Activated CD8-positive, alpha-beta memory T cell treated with anti-CD3 and anti-CD28 coated beads, Interleukin-2, amount 10 ng/mL, durations not matched to agents 7 days and 5 days (primary cell): ENCODE measurements at regions of chr18 and their contacts with region 1.

Region 1: DNA sequence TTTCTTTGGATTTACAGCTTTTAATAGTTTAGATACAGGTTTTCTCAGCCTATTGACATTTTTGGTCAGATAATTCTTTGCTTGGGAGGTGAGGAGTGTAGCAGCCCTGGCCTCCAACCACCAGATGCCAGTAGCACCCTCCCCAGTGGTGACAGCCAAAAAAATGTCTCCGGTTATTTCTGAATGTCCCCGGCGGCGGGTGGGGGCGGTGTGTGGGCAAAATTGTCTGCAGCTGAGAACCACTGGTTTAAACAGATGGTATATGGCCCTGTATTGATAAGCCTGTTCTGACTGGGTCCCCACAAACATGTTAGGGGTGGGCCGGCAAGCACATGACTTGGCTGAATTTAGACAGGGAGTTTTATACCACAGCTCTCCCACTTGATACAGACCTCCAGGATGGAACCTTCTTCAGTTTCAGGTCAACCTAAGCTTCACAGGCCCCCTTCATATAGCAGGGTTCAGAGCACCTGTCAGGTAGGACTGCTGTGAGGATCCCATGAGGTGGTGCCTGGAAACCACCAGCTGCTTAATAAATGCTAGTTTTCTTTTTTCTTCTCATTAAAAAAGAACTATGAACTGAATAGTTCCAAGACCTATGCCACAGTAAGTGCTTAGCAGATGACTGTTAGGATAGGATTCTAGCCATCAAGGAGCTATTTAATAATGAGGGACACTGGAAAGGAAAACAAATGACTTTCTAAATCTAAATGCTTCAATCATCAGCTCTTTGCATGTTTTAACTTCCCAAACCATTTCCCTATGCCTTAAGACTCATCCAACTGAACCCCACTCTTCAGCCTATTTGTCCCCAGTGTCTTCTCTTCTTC is 18.1 kb downstream of the LPIN2 start:
- DNase-seq: peak; percentile 86
- ATAC-seq: peak; percentile 77
- H3K4me3 Mint-ChIP-seq: peak overlapping the region; percentile 9
- H3K27ac Mint-ChIP-seq: peak overlapping the region; percentile 79
- H3K4me1 Mint-ChIP-seq: peaks cover 78% of the 10 kb centered on the region
- H3K27me3 Mint-ChIP-seq: no peaks in the 10 kb centered on the region

Region 2: GRCh38 chr18:2932247-2933181 is 62.3 kb before region 1 on chr18:
- CTCF ChIA-PET with region 1: interaction called, 48 read pairs
- DNase-seq: no peak
- ATAC-seq: peak; percentile 60
- H3K4me3 Mint-ChIP-seq: peak overlapping the region; percentile 10
- H3K27ac Mint-ChIP-seq: peak overlapping the region; percentile 76
- H3K4me1 Mint-ChIP-seq: peaks cover 29% of the 10 kb centered on the region
- H3K27me3 Mint-ChIP-seq: no peaks in the 10 kb centered on the region

Region 3: GRCh38 chr18:2958819-2959298 is 36.0 kb before region 1 on chr18:
- CTCF ChIA-PET with region 1: interaction called, 111 read pairs
- DNase-seq: peak; percentile 83
- ATAC-seq: peak; percentile 40
- H3K4me3 Mint-ChIP-seq: peak overlapping the region; percentile 50
- H3K27ac Mint-ChIP-seq: peak overlapping the region; percentile 100
- H3K4me1 Mint-ChIP-seq: peaks cover 88% of the 10 kb centered on the region
- H3K27me3 Mint-ChIP-seq: no peaks in the 10 kb centered on the region

Region 4: DNA sequence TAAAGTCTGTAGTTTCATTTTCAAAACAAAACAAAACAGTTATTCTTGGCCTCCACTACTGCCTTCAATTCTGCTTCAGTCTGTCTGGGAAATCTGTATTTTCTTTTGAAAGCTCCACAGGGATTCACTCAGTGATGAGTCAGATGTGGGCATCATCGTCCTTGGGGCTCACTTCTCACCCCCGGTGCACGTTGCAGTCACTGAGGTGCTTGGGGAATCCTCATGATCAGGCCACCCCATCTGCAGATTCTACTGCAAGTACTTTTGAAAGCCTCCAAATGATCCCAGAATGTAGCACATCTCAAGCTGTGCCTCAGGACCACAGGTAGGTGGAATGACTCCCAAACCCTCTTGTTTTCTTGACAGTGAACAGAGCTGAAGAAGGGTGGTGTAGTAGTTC is 16.2 kb before region 1 on chr18:
- CTCF ChIA-PET with region 1: interaction called, 23 read pairs
- DNase-seq: peak; percentile 59
- ATAC-seq: peak; percentile 20
- H3K4me3 Mint-ChIP-seq: peak overlapping the region; percentile 73
- H3K27ac Mint-ChIP-seq: peak overlapping the region; percentile 91
- H3K4me1 Mint-ChIP-seq: peaks cover 82% of the 10 kb centered on the region
- H3K27me3 Mint-ChIP-seq: no peaks in the 10 kb centered on the region

Region 5: DNA sequence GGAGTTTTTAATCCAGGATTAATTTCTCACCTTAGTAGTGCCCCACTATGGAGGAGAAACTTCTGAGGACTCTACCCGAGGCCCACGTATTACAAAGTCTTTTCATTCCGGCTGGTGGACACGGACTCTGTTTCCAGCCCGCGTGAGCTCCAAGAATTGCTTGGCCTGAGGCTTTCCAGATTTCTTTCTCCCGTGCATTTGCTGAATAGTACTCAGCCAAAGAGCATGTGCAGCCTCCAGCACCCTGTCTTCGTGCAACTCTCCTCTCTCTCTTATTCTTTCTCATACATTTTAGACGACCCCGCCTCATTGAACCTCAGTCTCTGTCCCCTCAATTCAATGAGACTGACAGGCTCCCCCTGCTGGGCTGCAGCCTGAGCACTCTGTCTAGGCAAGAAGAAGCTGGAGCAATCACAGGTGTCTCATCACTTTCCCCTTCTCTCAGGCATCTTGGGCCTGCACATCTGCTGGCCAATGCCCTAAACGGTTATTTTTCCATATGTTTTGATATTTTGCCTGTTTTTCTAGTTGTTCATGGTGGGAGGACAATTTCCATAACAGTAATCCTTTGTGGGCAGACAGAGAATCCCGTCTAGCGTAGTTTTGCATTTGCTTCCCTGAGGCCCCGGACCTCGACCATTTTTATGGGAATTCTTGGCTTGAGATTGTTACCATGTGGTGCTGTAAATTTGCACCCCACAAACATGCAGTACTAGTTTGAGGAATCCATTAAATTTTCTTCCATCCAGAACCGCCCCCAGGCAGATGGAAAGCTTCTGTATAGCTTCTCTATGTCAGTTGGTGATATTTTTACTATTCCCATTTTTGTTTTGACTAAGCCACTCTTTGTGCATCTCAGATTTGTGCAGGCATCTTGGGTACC is 68.2 kb after region 1 on chr18:
- CTCF ChIA-PET with region 1: interaction called, 258 read pairs
- DNase-seq: peak; percentile 88
- ATAC-seq: peak; percentile 45
- H3K4me3 Mint-ChIP-seq: peak overlapping the region; percentile 62
- H3K27ac Mint-ChIP-seq: peak overlapping the region; percentile 100
- H3K4me1 Mint-ChIP-seq: peaks cover 72% of the 10 kb centered on the region
- H3K27me3 Mint-ChIP-seq: no peaks in the 10 kb centered on the region

Region 6: GRCh38 chr18:3129053-3129864 is 134.4 kb after region 1 on chr18:
- CTCF ChIA-PET with region 1: interaction called, 61 read pairs
- DNase-seq: peak; percentile 87
- ATAC-seq: peak; percentile 97
- H3K4me3 Mint-ChIP-seq: no peak overlapping the region
- H3K27ac Mint-ChIP-seq: no peak overlapping the region
- H3K4me1 Mint-ChIP-seq: peaks cover 12% of the 10 kb centered on the region
- H3K27me3 Mint-ChIP-seq: no peaks in the 10 kb centered on the region

Region 7: GRCh38 chr18:3245853-3246634 is 251.2 kb after region 1 on chr18:
- CTCF ChIA-PET with region 1: interaction called, 40 read pairs
- DNase-seq: peak; percentile 90
- ATAC-seq: peak; percentile 56
- H3K4me3 Mint-ChIP-seq: peak overlapping the region; percentile 92
- H3K27ac Mint-ChIP-seq: peak overlapping the region; percentile 99
- H3K4me1 Mint-ChIP-seq: peaks cover 24% of the 10 kb centered on the region
- H3K27me3 Mint-ChIP-seq: peaks cover 4% of the 10 kb centered on the region